ENCODE measurements at regions of chr20 and their contacts with region 1.

Region 1: DNA sequence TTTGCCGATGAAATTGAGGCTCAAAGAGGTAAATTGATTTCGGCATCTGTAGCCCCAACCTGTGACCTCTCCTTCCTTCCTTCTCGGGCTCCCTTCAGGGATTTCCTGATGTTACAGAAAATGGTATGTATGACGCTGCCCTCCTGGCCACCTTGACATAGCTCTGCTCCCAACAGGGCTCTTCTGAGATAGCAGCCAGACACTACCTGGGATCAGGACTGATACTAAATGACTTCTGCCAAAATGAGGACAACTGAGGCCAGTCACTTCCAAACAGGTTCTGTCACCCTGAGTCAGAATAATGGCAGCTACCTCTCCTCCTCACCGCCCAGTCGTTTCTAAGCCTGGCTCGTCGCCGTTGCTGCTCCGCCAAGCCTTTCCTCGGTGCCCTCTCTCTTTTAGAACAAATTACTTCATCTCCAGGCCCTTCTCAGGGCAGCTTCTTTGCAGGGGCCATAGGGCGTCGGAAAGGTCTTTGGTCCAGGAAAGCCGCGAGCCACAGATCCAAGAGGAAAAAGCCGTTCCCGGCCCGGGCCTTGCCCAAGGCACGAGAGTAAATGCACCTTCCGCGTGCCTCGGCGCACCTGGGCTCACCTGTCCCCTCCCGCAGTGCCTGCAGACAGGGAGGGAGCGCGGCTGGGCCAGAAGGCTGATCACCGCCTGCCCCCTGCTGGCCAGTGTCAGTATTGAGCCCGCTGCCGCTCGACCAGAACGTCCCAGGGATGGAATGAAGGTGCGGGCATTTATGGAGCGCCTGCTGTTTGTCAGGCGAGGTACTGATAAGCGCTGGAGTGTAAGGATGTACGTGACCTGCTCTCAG is 904 bp upstream of the LPIN3 start:
- DNase-seq: peak; percentile 67 to 97 (median 85)

Region 2: DNA sequence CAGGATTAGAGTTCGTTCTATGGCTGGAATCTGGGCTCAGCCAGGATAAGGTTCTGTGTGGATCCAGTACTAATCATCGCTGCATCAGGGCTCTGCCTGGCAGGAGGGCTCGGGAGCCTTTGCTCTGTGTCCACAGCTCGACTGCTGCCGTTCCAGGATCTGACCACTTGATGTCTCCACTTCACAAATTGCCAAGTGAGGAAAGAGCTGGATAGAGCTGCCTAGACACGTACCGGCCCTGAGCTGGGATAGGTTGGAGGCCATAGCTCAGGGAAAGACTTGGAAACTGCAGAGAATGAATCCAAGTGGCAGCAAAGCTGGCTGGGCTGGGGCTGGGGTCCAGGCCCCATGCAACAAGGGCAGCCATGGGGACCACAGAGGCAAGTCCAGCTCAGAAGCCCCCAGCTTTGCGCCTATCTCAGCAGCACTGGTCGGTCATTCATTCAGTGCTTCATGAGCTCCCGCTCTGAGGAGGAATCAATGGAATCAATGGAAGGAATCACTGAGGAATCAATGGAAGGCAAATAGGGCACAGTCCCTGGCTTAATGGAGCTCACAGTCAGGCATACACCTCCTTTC is 349.1 kb before region 1 on chr20:
- intact Hi-C with region 1: loop called (anchors 10 kb)
- DNase-seq: peak; percentile 35 to 96 (median 74)

Region 3: GRCh38 chr20:41173161-41173721 is 166.5 kb before region 1 on chr20:
- intact Hi-C with region 1: loop called (anchors 1 kb)
- DNase-seq: peak; percentile 82 to 98 (median 92)

Region 4: GRCh38 chr20:41232973-41233926 is 106.5 kb before region 1 on chr20:
- intact Hi-C with region 1: loop called (anchors 5 kb)
- DNase-seq: no peak

Region 5: DNA sequence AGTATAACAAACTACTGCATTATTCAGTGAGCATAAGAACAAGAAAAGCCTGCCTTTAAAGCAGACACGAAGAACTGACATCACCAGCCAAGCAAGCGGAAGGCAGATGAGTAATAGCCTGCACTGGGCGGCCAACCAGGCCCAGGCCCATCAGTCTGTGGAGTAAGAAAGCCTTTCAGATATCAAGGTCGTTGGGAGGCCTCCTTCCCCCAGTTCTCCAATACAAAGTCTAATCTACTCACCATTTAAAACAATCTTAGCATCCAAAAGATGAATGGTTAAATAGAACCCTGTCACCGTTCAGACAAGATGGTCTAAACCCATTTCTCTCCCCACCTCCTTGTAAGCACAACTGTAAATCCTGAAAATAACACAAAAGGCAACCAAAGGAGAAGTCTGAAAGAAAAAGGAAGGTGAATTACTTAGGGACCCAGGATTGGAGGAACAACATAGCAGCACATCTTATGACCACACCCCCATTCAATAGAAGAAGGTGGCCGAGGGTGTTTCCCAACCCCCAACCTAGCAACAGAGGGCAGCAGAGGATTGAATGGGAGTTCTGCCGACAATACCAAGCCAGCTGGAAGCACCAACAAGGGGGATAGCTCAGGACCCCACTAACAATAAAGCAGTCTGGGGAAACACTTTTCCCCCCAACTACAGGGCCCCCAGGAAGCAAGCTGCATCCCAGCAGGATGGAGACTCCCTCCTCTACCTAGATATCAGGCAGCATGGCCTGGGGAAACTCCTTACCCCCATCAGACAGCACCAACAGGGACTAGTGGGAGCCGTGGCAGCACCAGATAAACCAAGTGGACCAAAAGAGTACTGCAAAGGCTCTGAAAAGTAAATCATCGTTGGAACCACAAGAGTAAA is 90.1 kb before region 1 on chr20:
- intact Hi-C with region 1: loop called (anchors 5 kb)
- DNase-seq: peak; percentile 54 to 94 (median 62)

Region 6: GRCh38 chr20:41287327-41287726 is 52.4 kb before region 1 on chr20:
- intact Hi-C with region 1: no loop called
- DNase-seq: no peak

Region 7: GRCh38 chr20:41411391-41411847 is 71.7 kb after region 1 on chr20:
- intact Hi-C with region 1: loop called (anchors 5 kb)
- DNase-seq: no peak

Region 8: GRCh38 chr20:41697861-41698419 is 358.2 kb after region 1 on chr20:
- intact Hi-C with region 1: no loop called
- DNase-seq: no peak

Measured in posterior cingulate gyrus (tissue), 11 donors.